ENCODE measurements at regions of chr6 and their contacts with region 1.

Region 1: DNA sequence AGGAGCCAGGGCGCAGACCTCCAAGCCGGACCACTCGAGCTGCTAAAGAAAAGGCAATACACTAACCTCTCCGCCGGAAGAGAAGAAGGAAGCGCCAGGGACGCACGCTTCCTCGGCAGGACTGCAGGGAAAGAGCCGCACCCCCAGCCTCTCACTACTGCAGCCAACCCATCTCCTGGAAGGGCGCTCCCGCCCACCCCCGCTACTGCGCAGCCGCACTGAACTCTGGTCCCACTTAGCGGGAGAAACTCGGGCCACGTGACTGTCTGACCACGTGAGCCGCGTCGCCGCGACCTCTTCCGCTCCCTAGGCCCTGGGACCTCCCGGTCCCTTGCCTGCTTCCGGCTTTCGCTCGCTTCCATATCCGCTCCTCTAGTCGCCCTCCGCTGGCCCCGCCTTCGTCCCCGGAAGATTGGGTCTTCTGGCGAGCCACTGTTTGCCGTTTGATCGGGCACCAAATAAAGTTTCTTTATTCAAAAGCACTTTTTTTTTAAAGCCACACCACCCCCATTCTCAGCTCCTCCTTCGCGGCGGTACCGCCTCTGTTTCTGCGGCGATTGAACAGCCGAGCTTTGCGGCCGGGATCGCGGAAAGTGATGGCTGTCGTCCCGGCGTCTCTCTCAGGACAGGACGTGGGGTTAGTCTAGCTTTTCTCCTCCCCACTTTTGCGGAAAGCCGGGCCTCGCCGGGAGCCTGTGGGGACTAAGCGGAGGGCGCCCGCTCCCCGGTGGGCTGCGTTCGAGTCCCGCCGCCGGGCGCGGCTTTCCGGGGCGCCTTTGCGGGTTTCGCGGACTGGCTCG is at the start of gene RMND1:
- DNase-seq: peak; percentile 100
- H3K4me3 ChIP-seq: peak within 1 kb of the TSS; percentile 90 to 98 (median 93)
- H3K27ac ChIP-seq: peak within 1 kb of the TSS; percentile 79
- H3K4me1 ChIP-seq: peaks cover 4% of the 10 kb centered on the region
- H3K27me3 ChIP-seq: no peaks in the 10 kb centered on the region
- CTCF ChIP-seq: no peak
- total RNA-seq, gene RMND1: 15.7 to 26.7 TPM

Region 2: DNA sequence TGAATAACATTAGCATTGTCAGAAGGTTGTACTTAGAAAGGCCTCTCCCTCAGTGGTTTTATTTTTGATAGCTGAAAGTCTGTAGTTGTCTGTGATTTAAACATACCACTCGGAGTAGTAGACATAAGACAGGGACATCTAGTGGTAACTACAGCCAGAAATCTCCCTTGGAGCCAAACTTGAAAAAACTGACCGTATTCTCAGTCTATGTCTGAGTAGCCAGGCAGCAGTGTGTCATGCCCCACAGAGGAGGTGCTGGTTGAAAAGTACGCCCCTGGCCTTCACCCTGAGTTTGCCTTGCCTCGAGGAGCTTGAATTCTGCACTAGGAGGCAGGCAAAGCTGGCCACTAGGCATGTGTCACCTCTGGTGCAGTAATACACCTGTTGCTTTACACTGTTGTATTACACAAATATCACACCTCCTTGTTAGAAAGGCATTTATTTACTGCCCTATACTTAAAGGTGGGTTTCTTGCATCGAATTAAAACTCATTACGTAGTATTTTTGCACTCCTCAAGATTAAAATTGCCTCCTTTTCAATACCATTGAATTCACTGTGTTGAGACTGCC is 81.6 kb before region 1 on chr6:
- CTCF ChIA-PET with region 1: interaction called, 12 read pairs
- dilution Hi-C with region 1: no loop called
- in situ Hi-C with region 1: no loop called
- intact Hi-C with region 1: no loop called
- DNase-seq: no peak
- H3K4me3 ChIP-seq: no peak overlapping the region
- H3K27ac ChIP-seq: no peak overlapping the region
- H3K4me1 ChIP-seq: peaks cover 9% of the 10 kb centered on the region
- H3K27me3 ChIP-seq: no peaks in the 10 kb centered on the region
- CTCF ChIP-seq: no peak